GM12878 (cell line): ENCODE measurements at regions of chr1 and their contacts with region 1.

Region 1: DNA sequence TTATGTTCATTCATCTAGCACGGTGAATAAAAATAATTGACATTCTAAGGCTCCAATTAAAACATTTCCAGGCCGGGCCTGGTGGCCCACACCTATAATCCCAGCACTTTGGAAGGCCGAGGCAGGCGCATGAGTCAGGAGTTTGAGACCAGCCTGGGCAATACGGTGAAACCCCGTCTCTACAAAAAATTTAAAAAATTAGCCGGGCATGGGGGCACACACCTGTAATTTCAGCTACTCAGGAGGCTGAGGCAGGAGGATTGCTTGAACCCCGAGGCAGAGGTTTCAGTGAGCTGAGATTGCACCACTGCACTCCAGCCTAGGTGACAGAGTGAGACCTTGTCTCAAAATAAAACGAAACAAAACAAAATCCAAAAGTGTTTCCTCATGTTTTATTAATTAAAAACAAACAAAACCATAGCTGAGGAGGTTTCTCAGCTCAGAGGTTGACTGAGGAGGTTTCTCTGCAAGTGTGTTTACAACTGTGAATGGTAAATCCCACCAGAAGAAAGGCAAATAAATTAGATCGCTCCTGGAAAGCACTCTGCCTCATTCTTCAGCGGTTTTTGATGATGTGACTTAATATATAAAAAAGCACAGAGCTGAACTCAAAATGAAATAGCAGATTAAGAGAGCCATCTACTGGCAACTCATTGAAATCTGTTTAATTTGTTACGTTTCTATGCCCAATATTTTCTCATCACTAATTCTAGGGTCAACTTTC is 37.7 kb upstream of the ATG4C start:
- DNase-seq: no peak
- ATAC-seq: peak; percentile 70
- H3K4me3 ChIP-seq: no peak overlapping the region
- H3K27ac ChIP-seq: no peak overlapping the region
- H3K4me1 ChIP-seq: no peaks in the 10 kb centered on the region
- H3K27me3 ChIP-seq: no peaks in the 10 kb centered on the region
- CTCF ChIP-seq: peak; percentile 37 to 71 (median 44); a peak in 4 of 6 replicates
- EP300 ChIP-seq: no peak
- POLR2A ChIP-seq: no peak
- RAD21 ChIP-seq: peak; percentile 90

Region 2: DNA sequence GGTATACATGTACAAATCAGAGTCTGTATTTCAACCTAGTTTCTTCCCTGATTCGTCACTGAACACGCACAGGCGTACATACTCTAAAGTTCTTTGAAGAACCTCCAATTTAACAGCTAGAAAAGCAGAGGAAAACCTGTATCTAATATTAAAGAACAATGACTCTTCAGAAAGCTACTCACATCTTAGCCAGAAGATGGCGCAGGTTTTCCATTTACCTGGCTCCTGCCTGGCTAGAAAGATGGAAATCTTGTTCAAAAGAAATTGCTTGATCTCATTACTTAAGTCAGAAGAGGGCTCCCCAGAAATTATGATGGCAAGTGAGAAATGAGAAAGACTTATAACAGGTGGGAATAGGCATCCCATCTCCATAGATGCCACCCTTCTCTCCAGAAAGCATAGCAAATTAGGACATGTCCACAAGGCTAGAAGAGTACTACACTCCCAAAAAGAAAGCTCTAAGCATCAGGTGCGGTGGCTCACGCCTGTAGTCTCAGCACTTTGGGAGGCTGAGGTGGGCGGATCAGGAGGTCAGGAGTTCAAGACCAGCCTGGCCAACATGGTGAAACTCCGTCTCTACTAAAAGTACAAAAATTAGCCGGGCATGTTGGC is 570.6 kb before region 1 on chr1:
- CTCF ChIA-PET with region 1: interaction called, 31 read pairs
- POLR2A ChIA-PET with region 1: no interaction called
- RAD21 ChIA-PET with region 1: interaction called, 13 read pairs
- SMC1A ChIA-PET with region 1: interaction called, 25 read pairs
- in situ Hi-C with region 1: loop called (anchors 5 kb)
- intact Hi-C with region 1: loop called (anchors 2 kb)
- DNase-seq: no peak
- ATAC-seq: peak; percentile 75
- H3K4me3 ChIP-seq: no peak overlapping the region
- H3K27ac ChIP-seq: no peak overlapping the region
- H3K4me1 ChIP-seq: no peaks in the 10 kb centered on the region
- H3K27me3 ChIP-seq: no peaks in the 10 kb centered on the region
- CTCF ChIP-seq: peak; percentile 64 to 71 (median 69); a peak in 5 of 6 replicates
- EP300 ChIP-seq: no peak
- POLR2A ChIP-seq: no peak
- RAD21 ChIP-seq: peak; percentile 88

Region 3: DNA sequence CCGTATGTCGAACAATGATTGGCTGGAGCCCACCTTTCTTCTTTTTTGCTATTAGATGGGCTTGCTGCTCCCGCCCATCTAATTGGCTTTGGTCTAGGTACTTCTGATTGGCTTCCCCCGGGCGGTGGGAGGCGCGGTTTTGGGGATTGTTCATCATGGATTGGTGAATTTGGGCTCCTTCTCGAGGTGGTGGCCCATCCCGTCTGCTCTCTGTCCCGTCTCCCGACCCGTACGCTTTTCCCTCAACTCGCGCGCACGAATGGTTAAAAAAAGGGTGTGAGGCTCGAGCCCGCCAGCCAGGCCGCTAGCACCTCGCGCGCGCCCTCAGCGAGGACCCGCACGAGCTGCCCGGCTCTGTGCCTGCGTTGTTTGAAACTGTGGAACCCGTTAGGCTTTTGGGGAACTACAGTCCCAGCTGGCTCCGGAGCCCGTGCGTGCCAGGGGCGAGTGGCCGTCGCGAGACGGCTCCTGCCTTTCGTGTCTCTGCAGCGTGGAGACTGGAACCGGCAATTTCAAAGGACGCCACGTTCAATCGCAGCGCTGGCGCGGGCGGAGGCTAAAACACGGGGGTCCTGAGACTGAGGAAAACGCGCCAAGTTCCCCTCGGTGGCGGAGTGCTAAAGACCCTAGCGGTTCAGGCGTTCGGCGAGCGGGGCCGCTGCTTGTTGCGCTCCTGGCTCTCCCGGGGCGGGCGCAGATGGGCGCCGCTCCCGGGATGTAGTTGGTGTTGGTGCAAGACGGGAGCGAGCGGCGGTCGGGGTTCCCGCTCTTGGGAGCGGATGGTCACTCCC is 309.6 kb before region 1 on chr1 and contains the start of gene USP1:
- CTCF ChIA-PET with region 1: interaction called, 13 read pairs
- POLR2A ChIA-PET with region 1: interaction called, 3 read pairs
- RAD21 ChIA-PET with region 1: interaction called, 8 read pairs
- SMC1A ChIA-PET with region 1: interaction called, 6 read pairs
- in situ Hi-C with region 1: no loop called
- intact Hi-C with region 1: no loop called
- DNase-seq: peak; percentile 99
- ATAC-seq: peak; percentile 85
- H3K4me3 ChIP-seq: peak within 1 kb of the TSS; percentile 88
- H3K27ac ChIP-seq: peak within 1 kb of the TSS; percentile 95
- H3K4me1 ChIP-seq: no peaks in the 10 kb centered on the region
- H3K27me3 ChIP-seq: no peaks in the 10 kb centered on the region
- CTCF ChIP-seq: no peak
- EP300 ChIP-seq: 0 out of 4 replicates have a peak, but pooled peaks of 1 of the 2 experiments have one; percentile 7
- POLR2A ChIP-seq: peak; percentile 92
- RAD21 ChIP-seq: no peak
- polyA plus RNA-seq, gene USP1: 28.0 to 35.9 TPM

Region 4: GRCh38 chr1:62500210-62500609 is 246.0 kb before region 1 on chr1:
- CTCF ChIA-PET with region 1: interaction called, 305 read pairs
- POLR2A ChIA-PET with region 1: no interaction called
- RAD21 ChIA-PET with region 1: interaction called, 8 read pairs
- SMC1A ChIA-PET with region 1: interaction called, 186 read pairs
- in situ Hi-C with region 1: loop called (anchors 5 kb)
- intact Hi-C with region 1: no loop called
- DNase-seq: no peak
- ATAC-seq: no peak
- H3K4me3 ChIP-seq: no peak overlapping the region
- H3K27ac ChIP-seq: no peak overlapping the region
- H3K4me1 ChIP-seq: no peaks in the 10 kb centered on the region
- H3K27me3 ChIP-seq: no peaks in the 10 kb centered on the region
- CTCF ChIP-seq: no peak
- EP300 ChIP-seq: no peak
- POLR2A ChIP-seq: no peak
- RAD21 ChIP-seq: no peak

Region 5: DNA sequence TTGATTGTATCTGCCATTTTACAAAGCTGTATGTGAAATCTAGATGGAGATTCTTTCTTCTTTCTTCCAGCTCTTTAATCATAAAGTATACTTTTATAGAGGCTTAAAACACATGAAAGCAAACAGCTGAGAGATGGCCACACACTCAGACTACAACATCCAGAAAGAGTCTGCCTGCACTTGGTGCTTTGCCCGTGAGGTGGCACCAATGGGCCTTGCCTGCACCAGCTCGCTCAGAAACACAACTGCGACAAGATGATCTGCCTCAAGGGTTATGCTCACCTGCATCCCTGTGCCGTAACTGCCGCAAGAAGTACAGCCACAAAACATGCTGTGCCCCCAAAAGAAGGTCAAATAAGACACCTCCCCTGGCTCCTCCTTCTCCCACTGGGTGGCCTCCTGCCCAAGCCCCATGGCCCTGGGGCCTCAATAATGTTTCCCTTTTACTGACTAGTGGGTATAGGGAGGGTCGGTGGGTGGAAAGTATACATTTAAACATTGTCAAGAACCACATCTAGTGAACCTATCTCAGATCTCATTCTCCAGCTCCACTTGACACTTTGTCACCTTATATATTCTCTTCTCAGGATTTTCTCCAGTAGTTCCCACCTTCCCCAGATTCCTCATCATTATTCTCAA is 215.6 kb before region 1 on chr1:
- CTCF ChIA-PET with region 1: interaction called, 11 read pairs
- POLR2A ChIA-PET with region 1: no interaction called
- RAD21 ChIA-PET with region 1: interaction called, 5 read pairs
- SMC1A ChIA-PET with region 1: interaction called, 15 read pairs
- in situ Hi-C with region 1: no loop called
- intact Hi-C with region 1: no loop called
- DNase-seq: no peak
- ATAC-seq: no peak
- H3K4me3 ChIP-seq: no peak overlapping the region
- H3K27ac ChIP-seq: no peak overlapping the region
- H3K4me1 ChIP-seq: no peaks in the 10 kb centered on the region
- H3K27me3 ChIP-seq: no peaks in the 10 kb centered on the region
- CTCF ChIP-seq: no peak
- EP300 ChIP-seq: no peak
- POLR2A ChIP-seq: no peak
- RAD21 ChIP-seq: no peak

Region 6: GRCh38 chr1:62687903-62688686 is 58.2 kb before region 1 on chr1 and contains the start of gene DOCK7:
- CTCF ChIA-PET with region 1: interaction called, 16 read pairs
- POLR2A ChIA-PET with region 1: no interaction called
- RAD21 ChIA-PET with region 1: interaction called, 5 read pairs
- SMC1A ChIA-PET with region 1: interaction called, 18 read pairs
- in situ Hi-C with region 1: no loop called
- intact Hi-C with region 1: no loop called
- DNase-seq: no peak
- ATAC-seq: peak; percentile 77
- H3K4me3 ChIP-seq: peak within 1 kb of the TSS; percentile 87
- H3K27ac ChIP-seq: peak within 1 kb of the TSS; percentile 83
- H3K4me1 ChIP-seq: peaks cover 4% of the 10 kb centered on the region; the same call in 1 of the 2 replicates
- H3K27me3 ChIP-seq: no peaks in the 10 kb centered on the region
- CTCF ChIP-seq: no peak
- EP300 ChIP-seq: no peak
- POLR2A ChIP-seq: peak; percentile 77
- RAD21 ChIP-seq: no peak
- polyA plus RNA-seq, gene DOCK7: 4.8 to 7.0 TPM

Region 7: DNA sequence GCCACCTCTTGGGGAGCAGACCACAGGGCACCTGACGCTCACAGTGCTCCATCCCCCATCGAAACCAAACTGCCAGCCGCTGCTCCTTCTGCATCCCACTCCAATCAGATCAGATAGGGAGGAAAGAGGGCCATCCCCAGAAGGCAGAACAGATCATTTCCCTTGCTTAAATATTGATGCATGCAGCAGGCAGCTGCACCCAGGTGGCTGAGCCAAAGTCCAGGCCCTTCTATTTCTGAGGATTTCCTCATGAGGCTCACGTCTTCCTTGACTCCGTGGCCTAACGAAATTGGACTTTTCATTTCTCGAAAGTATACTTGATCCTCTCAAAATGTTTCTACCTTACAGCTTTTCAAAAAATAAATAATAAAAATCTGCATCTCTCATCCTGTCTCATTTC is 276.9 kb after region 1 on chr1:
- CTCF ChIA-PET with region 1: no interaction called
- POLR2A ChIA-PET with region 1: no interaction called
- RAD21 ChIA-PET with region 1: no interaction called
- SMC1A ChIA-PET with region 1: no interaction called
- in situ Hi-C with region 1: no loop called
- intact Hi-C with region 1: no loop called
- DNase-seq: no peak
- ATAC-seq: no peak
- H3K4me3 ChIP-seq: no peak overlapping the region
- H3K27ac ChIP-seq: no peak overlapping the region
- H3K4me1 ChIP-seq: no peaks in the 10 kb centered on the region
- H3K27me3 ChIP-seq: no peaks in the 10 kb centered on the region
- CTCF ChIP-seq: no peak
- EP300 ChIP-seq: no peak
- POLR2A ChIP-seq: no peak
- RAD21 ChIP-seq: no peak

Region 8: DNA sequence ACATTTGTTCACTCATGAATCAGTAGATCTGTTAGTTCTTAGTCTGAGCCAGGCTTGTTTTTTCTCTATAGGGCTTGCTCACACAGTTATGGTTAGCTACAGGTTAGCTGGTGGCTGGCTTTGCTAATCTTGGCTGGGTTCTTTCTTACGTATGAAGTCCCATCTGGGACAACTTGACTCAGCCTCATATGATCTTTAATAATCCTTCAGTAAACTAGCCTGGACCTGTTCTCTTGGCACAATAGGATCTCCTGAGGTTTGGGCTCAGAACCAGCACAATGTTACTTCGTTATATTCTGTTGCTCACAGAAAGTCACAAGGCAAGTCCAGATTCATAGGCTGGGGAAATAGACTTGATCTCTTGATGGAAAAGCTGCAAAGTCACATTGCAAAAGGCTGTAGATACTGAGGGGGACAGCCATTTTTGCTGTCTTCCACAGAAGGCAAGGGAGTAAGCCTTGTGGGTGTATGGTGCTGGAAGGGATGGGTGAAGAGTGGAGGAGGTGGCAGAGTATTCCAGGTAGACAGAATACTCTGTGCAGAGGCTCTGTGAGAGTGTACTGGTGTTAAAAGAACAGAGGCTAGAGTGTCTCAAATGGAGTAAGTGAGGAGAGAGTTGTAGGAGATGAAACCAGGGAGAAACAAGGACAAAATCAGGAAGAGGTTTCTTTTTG is 801.5 kb after region 1 on chr1:
- CTCF ChIA-PET with region 1: no interaction called
- POLR2A ChIA-PET with region 1: no interaction called
- RAD21 ChIA-PET with region 1: no interaction called
- SMC1A ChIA-PET with region 1: no interaction called
- in situ Hi-C with region 1: no loop called
- intact Hi-C with region 1: no loop called
- DNase-seq: no peak
- ATAC-seq: no peak
- H3K4me3 ChIP-seq: no peak overlapping the region
- H3K27ac ChIP-seq: no peak overlapping the region
- H3K4me1 ChIP-seq: no peaks in the 10 kb centered on the region
- H3K27me3 ChIP-seq: no peaks in the 10 kb centered on the region
- CTCF ChIP-seq: no peak
- EP300 ChIP-seq: no peak
- POLR2A ChIP-seq: no peak
- RAD21 ChIP-seq: no peak